OCI-LY7 (cell line): ENCODE measurements at regions of chr3 and their contacts with region 1.

Region 1: DNA sequence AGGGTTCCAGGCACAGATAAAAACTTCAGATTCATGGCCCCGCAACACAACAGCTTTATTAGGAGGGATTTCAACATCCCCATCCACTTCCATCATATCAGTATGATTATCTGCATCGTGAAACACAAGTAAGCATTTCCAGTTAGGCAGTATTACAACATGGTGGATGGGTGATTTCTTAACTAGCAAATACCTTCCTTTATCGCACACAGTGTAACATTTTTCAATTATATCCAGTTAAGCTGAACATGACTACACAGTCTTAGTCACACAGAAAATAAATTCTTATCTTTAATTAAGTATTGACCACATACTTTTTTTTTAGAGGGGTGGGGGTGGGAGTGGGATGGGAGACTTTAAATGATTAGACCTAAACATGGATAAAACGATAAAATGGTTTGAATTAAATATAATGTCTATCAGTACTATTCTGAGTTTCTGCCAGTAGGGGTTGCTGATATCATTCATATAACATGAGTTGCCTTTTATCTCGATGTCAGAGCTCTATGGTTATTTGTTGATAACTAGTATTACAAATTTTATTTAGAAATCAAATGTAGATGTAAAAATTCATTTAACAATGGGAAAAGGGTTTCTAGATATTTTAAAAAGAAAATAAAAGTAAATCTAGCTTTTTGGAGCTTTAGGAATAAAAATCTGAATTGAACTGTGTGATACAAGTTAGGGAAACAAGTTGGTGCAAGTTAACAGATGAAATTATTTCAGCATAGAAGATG is 146.6 kb downstream of the TBL1XR1 start:
- DNase-seq: peak; percentile 67
- H3K4me3 ChIP-seq: no peak overlapping the region
- H3K27ac ChIP-seq: peak overlapping the region; percentile 64
- H3K4me1 ChIP-seq: peaks cover 22% of the 10 kb centered on the region
- CTCF ChIP-seq: peak; percentile 90

Region 2: DNA sequence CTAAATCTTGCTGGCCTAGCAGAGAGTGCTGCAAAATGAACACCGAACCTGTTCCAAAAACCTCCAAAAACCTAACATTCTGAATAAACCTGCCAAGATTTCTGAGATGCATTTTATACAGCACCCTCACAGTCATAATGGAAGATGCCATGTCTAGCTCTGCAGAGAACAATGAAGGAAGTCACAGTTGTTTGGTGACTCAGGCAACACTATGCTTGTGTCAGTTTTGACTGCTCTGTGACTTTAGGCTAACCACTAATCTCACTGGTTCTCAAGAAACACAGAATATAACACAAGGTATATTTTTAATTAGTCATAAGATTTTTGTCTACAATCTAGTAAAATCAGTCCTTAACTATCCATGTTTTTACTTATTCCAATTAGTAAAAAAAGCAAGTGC is 459.9 kb before region 1 on chr3:
- CTCF ChIA-PET with region 1: no interaction called
- POLR2A ChIA-PET with region 1: no interaction called
- intact Hi-C with region 1: no loop called
- DNase-seq: no peak
- H3K4me3 ChIP-seq: no peak overlapping the region
- H3K27ac ChIP-seq: no peak overlapping the region
- H3K4me1 ChIP-seq: no peaks in the 10 kb centered on the region
- CTCF ChIP-seq: no peak

Region 3: DNA sequence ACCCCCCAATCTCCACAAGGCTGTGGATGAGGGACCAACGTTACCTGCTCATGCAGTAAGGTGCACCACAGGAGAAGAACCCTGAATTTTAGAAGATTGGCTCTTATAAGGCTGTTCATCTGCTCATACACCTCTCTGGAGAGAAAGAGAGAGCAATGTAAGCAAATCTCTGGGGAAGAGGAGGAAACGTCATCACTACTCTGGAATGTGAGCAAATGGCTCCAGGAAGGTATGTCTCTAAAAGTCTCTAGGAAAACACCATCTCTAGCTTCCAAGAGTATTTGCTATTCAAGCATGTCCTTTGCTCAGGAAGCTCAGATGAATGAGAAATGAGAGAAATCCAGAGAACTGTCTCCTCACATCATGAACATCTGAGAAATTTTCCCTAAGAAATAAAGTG is 88.8 kb before region 1 on chr3:
- CTCF ChIA-PET with region 1: no interaction called
- POLR2A ChIA-PET with region 1: no interaction called
- intact Hi-C with region 1: no loop called
- DNase-seq: no peak
- H3K4me3 ChIP-seq: no peak overlapping the region
- H3K27ac ChIP-seq: no peak overlapping the region
- H3K4me1 ChIP-seq: peaks cover 8% of the 10 kb centered on the region
- CTCF ChIP-seq: no peak

Region 4: GRCh38 chr3:177169936-177170722 is 119.5 kb after region 1 on chr3:
- CTCF ChIA-PET with region 1: no interaction called
- POLR2A ChIA-PET with region 1: no interaction called
- intact Hi-C with region 1: no loop called
- DNase-seq: no peak
- H3K4me3 ChIP-seq: no peak overlapping the region
- H3K27ac ChIP-seq: no peak overlapping the region
- H3K4me1 ChIP-seq: peaks cover 20% of the 10 kb centered on the region
- CTCF ChIP-seq: no peak

Region 5: GRCh38 chr3:177197041-177197727 is 146.5 kb after region 1 on chr3 and contains the start of gene TBL1XR1:
- CTCF ChIA-PET with region 1: no interaction called
- POLR2A ChIA-PET with region 1: interaction called, 12 read pairs
- intact Hi-C with region 1: loop called (anchors 2 kb)
- DNase-seq: peak; percentile 94
- H3K4me3 ChIP-seq: peak within 1 kb of the TSS; percentile 100
- H3K27ac ChIP-seq: peak within 1 kb of the TSS; percentile 95
- H3K4me1 ChIP-seq: peaks cover 56% of the 10 kb centered on the region
- CTCF ChIP-seq: no peak
- total RNA-seq, gene TBL1XR1: 103 and 121 TPM in 2 replicates

Region 6: DNA sequence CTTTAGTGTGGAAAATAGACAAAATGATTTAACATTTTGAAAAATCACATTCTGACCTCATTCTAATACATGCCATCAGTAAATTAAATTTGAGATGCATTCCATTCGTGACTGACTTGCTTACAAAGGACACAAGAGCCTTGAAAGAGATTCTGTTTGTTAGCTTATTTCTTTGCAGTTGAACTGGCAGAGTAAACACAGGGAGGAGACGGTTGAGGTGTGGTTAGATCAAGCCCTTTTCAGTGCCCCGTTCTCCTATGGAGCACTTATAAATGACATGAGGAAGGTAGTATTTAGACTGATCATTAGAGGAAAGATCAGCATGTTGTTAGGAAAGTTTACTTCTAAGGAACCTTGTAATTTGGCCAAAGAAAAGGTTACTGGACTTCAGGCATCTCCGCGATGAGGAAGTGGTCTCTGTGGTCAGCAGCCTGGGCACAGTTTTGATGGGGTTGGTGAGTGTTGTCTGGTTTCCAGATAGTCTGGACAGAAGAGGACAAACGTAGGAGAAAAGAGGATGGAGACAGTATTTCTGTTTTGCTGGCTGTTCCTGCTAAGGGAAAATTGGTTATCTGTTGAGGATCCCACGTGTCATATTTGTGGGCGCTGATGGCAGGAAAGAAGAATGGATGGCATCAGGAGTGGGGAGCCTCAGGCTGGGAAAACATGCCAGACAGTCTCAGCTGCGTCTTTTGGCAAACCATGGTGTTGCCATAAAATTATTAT is 475.5 kb after region 1 on chr3:
- CTCF ChIA-PET with region 1: no interaction called
- POLR2A ChIA-PET with region 1: no interaction called
- intact Hi-C with region 1: no loop called
- DNase-seq: no peak
- H3K4me3 ChIP-seq: no peak overlapping the region
- H3K27ac ChIP-seq: no peak overlapping the region
- H3K4me1 ChIP-seq: no peaks in the 10 kb centered on the region
- CTCF ChIP-seq: no peak